ENCODE measurements at regions of chr18 and their contacts with region 1.

Region 1: DNA sequence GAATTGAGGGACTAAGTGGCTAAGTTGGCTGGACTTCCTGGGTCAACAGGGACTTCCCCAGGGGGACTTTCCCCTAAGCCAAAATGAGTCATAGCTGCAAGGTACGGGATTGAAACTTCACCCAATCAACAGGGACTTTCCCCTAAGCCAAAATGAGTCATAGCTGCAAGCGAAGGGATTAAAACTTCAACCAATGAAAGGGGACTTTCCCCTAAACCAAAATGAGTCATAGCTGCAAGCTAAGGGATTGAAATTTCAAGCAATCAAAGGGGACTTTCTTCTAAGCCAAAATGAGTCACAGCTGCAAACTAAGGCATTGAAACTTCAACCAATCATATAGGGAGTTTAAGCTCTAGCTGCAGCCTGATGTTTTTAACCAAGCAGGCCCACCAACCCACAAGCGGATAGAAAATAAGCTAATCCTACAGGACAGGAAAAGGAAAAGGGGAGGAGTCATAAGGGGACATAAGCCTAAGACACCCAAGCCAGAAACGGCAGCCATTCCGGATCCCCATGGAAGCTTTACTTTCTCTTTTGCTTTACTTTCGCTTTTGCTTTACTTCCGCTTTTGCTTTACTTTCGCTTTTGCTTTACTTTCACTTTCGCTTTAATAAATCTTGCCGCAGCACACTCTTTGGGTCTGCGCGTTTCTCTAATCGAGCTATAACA is 1375.4 kb upstream of the CELF4 start:
- DNase-seq: peak; percentile 53
- ATAC-seq: no peak
- H3K4me3 ChIP-seq: no peak overlapping the region
- H3K27ac ChIP-seq: no peak overlapping the region
- H3K4me1 ChIP-seq: no peaks in the 10 kb centered on the region
- H3K27me3 ChIP-seq: no peaks in the 10 kb centered on the region
- CTCF ChIP-seq: no peak
- POLR2A ChIP-seq: no peak
- RAD21 ChIP-seq: no peak

Region 2: DNA sequence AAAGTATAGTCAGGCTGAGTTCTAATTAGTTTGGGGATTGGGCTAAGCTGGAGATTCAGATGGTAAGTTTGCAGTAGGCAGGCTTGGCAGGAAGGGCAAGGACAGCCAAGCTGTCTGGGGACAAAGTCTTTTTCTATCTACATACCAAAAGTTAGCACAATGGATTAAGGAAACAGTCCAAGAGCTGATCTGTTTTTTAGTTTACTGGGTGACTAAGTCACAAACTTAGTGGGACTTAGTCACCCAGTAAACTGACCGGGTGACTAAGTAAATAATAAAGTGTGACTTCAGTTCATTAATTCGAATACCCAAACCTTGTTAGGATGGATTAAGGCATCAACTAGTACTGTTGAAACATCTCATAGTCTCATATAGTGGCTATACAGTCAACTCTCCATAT is 10.6 kb after region 1 on chr18:
- CTCF ChIA-PET with region 1: no interaction called
- POLR2A ChIA-PET with region 1: no interaction called
- dilution Hi-C with region 1: no loop called
- in situ Hi-C with region 1: no loop called
- intact Hi-C with region 1: loop called (anchors 1 kb)
- DNase-seq: no peak
- ATAC-seq: no peak
- H3K4me3 ChIP-seq: no peak overlapping the region
- H3K27ac ChIP-seq: no peak overlapping the region
- H3K4me1 ChIP-seq: no peaks in the 10 kb centered on the region
- H3K27me3 ChIP-seq: no peaks in the 10 kb centered on the region
- CTCF ChIP-seq: no peak
- POLR2A ChIP-seq: no peak
- RAD21 ChIP-seq: no peak

Region 3: DNA sequence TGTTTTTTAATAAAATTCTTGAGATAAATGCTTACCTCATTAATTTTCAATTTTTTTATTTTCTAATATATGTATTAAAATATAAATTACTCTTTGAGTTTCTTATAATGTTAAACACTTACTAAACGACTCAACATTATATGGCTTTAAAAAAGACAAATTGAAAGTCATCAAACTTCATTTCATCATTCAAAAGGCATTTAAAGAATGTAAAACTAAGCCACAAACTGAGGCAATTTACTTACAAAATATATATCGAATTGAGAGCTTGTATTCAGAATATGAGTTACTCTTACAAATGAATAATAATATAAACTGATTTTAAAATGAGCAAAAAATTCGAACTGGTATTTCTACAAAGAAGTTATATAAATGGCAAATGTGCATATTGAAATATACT is 1751.9 kb after region 1 on chr18:
- CTCF ChIA-PET with region 1: no interaction called
- POLR2A ChIA-PET with region 1: no interaction called
- dilution Hi-C with region 1: no loop called
- in situ Hi-C with region 1: no loop called
- intact Hi-C with region 1: no loop called
- DNase-seq: peak; percentile 40
- ATAC-seq: no peak
- H3K4me3 ChIP-seq: no peak overlapping the region
- H3K27ac ChIP-seq: no peak overlapping the region
- H3K4me1 ChIP-seq: no peaks in the 10 kb centered on the region
- H3K27me3 ChIP-seq: no peaks in the 10 kb centered on the region; the same call in 1 of the 2 replicates
- CTCF ChIP-seq: no peak
- POLR2A ChIP-seq: no peak
- RAD21 ChIP-seq: no peak

Measured in IMR-90 (cell line).